ENCODE measurements at regions of chr5 and their contacts with region 1.

Region 1: GRCh38 chr5:91101600-91102379 is 281.3 kb downstream of the ARRDC3 start:
- DNase-seq: no peak
- ATAC-seq: peak; percentile 92
- H3K4me3 Mint-ChIP-seq: no peak overlapping the region
- H3K27ac Mint-ChIP-seq: no peak overlapping the region
- H3K4me1 Mint-ChIP-seq: no peaks in the 10 kb centered on the region
- H3K27me3 Mint-ChIP-seq: no peaks in the 10 kb centered on the region
- CTCF ChIP-seq: no peak

Region 2: GRCh38 chr5:91132550-91132949 is 30.8 kb after region 1 on chr5:
- CTCF ChIA-PET with region 1: no interaction called
- POLR2A ChIA-PET with region 1: no interaction called
- intact Hi-C with region 1: no loop called
- DNase-seq: no peak
- ATAC-seq: peak; percentile 66
- H3K4me3 Mint-ChIP-seq: no peak overlapping the region
- H3K27ac Mint-ChIP-seq: no peak overlapping the region
- H3K4me1 Mint-ChIP-seq: peaks cover 6% of the 10 kb centered on the region
- H3K27me3 Mint-ChIP-seq: peaks cover 5% of the 10 kb centered on the region
- CTCF ChIP-seq: no peak

Region 3: GRCh38 chr5:91219803-91220371 is 118.1 kb after region 1 on chr5:
- CTCF ChIA-PET with region 1: no interaction called
- POLR2A ChIA-PET with region 1: no interaction called
- intact Hi-C with region 1: loop called (anchors 2 kb)
- DNase-seq: no peak
- ATAC-seq: no peak
- H3K4me3 Mint-ChIP-seq: no peak overlapping the region
- H3K27ac Mint-ChIP-seq: no peak overlapping the region
- H3K4me1 Mint-ChIP-seq: no peaks in the 10 kb centered on the region
- H3K27me3 Mint-ChIP-seq: peaks cover 3% of the 10 kb centered on the region
- CTCF ChIP-seq: no peak